BJ (cell line): ENCODE measurements at regions of chr4 and their contacts with region 1.

Region 1: DNA sequence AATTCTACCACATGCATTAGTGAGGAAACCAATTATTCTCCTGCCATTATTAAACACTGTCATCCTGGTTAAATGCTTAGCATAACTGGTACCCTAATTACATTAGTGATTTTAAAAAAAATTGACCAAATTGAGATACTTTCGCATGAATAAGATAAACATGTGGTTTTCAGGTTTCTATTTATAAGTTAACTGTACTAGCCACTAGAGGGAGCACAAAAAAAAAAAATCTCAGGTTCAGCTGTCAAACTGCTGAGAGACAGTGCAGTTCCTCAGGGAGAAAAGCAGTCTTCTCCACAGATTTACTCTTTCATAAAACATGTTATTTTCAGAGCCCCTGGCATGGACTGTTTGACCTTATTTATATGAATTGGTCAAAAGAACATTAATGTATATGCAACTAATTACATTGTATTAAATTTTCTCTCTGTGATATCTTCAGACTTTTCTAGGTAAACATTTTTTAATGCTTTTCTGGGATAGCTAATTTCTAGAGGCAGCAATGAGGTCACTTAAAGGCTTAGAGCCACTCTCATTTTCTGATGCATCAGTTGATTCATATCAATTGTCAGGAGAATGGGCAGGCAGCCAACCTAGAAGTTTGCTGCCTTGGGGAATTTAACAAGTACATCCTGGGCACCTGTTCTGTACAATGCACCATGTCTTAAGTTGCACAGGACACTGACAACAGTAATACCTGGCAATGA is 167.5 kb downstream of the CDS1 start:
- DNase-seq: no peak
- H3K4me3 ChIP-seq: no peak overlapping the region
- H3K27me3 ChIP-seq: no peaks in the 10 kb centered on the region
- CTCF ChIP-seq: peak; percentile 57

Region 2: DNA sequence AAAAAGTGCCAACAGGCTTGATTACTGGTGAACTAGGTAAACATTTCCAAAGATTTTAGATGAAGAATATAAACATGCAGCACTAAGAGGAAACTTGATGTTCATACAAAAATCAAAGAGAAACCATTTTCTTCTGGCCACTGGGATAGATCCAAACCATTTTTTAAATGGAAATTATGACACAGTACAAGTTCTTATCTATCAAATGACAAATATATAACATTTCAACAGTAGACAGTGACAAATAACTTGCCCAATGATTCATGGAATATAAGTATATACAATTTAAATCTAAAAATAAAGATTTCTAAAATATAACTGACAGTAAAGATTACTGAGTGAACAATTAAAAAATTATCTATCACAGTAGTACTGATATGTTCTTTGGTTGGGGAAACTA is 16.4 kb before region 1 on chr4:
- CTCF ChIA-PET with region 1: interaction called, 25 read pairs
- POLR2A ChIA-PET with region 1: no interaction called
- DNase-seq: no peak
- H3K4me3 ChIP-seq: no peak overlapping the region
- H3K27me3 ChIP-seq: no peaks in the 10 kb centered on the region
- CTCF ChIP-seq: no peak

Region 3: GRCh38 chr4:85029453-85029852 is 279.0 kb after region 1 on chr4:
- CTCF ChIA-PET with region 1: no interaction called
- POLR2A ChIA-PET with region 1: no interaction called
- DNase-seq: no peak
- H3K4me3 ChIP-seq: no peak overlapping the region
- H3K27me3 ChIP-seq: no peaks in the 10 kb centered on the region
- CTCF ChIP-seq: no peak